IMR-90 (cell line): ENCODE measurements at regions of chr12 and their contacts with region 1.

Region 1: GRCh38 chr12:18430425-18431048 is 169.2 kb downstream of the PIK3C2G start:
- DNase-seq: peak; percentile 71
- ATAC-seq: peak; percentile 99
- H3K4me3 ChIP-seq: no peak overlapping the region
- H3K27ac ChIP-seq: no peak overlapping the region
- H3K4me1 ChIP-seq: no peaks in the 10 kb centered on the region
- H3K27me3 ChIP-seq: no peaks in the 10 kb centered on the region
- CTCF ChIP-seq: peak; percentile 86
- POLR2A ChIP-seq: no peak
- RAD21 ChIP-seq: peak; percentile 89

Region 2: GRCh38 chr12:18373181-18373580 is 57.4 kb before region 1 on chr12:
- CTCF ChIA-PET with region 1: no interaction called
- POLR2A ChIA-PET with region 1: no interaction called
- dilution Hi-C with region 1: no loop called
- in situ Hi-C with region 1: no loop called
- intact Hi-C with region 1: no loop called
- DNase-seq: no peak
- ATAC-seq: no peak
- H3K4me3 ChIP-seq: no peak overlapping the region
- H3K27ac ChIP-seq: no peak overlapping the region
- H3K4me1 ChIP-seq: no peaks in the 10 kb centered on the region
- H3K27me3 ChIP-seq: no peaks in the 10 kb centered on the region
- CTCF ChIP-seq: no peak
- POLR2A ChIP-seq: no peak
- RAD21 ChIP-seq: no peak

Region 3: DNA sequence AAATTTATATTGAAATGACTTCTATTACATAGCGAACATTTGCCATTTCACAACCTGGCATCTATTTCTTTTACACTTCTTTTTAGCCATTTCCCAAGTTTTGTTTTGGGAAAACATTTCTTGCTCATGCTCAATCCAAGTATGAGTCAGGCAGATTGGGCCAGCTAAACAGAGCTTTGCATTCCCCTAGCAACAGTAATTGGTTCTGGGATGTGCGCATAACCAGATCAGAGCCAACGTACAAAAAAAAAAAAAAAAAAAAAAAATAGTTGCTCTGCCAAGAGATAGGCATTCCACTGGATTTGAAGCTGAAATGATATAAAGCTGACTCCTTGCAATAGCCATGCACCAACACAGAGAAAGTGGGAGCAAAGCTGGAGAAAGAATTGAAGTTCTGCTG is 269.7 kb after region 1 on chr12:
- CTCF ChIA-PET with region 1: no interaction called
- POLR2A ChIA-PET with region 1: no interaction called
- dilution Hi-C with region 1: no loop called
- in situ Hi-C with region 1: no loop called
- intact Hi-C with region 1: loop called (anchors 10 kb)
- DNase-seq: peak; percentile 96
- ATAC-seq: peak; percentile 77
- H3K4me3 ChIP-seq: no peak overlapping the region
- H3K27ac ChIP-seq: no peak overlapping the region
- H3K4me1 ChIP-seq: peaks cover 2% of the 10 kb centered on the region; the same call in 1 of the 2 replicates
- H3K27me3 ChIP-seq: no peaks in the 10 kb centered on the region
- CTCF ChIP-seq: no peak
- POLR2A ChIP-seq: no peak
- RAD21 ChIP-seq: no peak; the same call in 1 of the 2 replicates

Region 4: GRCh38 chr12:18861287-18861858 is 430.8 kb after region 1 on chr12:
- CTCF ChIA-PET with region 1: no interaction called
- POLR2A ChIA-PET with region 1: no interaction called
- dilution Hi-C with region 1: no loop called
- in situ Hi-C with region 1: no loop called
- intact Hi-C with region 1: loop called (anchors 5 kb)
- DNase-seq: peak; percentile 38
- ATAC-seq: no peak
- H3K4me3 ChIP-seq: no peak overlapping the region
- H3K27ac ChIP-seq: no peak overlapping the region
- H3K4me1 ChIP-seq: no peaks in the 10 kb centered on the region
- H3K27me3 ChIP-seq: no peaks in the 10 kb centered on the region
- CTCF ChIP-seq: peak; percentile 43
- POLR2A ChIP-seq: no peak
- RAD21 ChIP-seq: peak; percentile 46

Region 5: DNA sequence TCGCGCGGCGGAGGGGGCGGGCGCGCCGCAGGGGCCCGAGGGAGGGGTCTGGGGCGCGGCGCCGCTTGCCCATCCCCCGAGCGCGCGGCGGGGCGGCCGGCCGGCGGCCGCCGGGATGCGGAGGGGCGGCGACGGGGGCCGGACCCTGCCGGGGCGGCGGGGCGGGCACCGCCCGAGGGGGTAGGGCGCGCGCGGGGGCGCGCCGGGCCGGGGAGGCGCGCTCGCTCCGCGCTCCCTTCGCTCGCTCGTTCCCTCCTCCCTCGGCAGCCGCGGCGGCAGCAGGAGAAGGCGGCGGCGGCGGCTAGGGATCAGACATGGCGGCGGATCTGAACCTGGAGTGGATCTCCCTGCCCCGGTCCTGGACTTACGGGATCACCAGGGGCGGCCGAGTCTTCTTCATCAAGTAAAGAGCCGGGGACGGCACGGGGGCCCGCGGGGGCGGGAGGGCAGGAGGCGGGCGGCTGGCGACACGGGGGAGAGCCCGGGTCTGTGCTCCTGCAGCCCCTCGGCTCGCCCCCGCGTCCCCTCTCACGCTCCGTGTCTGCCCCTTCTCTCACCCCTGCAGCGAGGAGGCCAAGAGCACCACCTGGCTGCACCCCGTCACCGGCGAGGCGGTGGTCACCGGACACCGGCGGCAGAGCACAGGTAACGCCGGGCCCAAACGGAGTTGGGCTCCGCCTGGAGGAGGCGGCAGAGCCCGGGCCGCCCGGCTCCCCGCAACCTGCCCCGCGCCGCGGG is 699.1 kb after region 1 on chr12 and contains the start of gene PLEKHA5:
- CTCF ChIA-PET with region 1: no interaction called
- POLR2A ChIA-PET with region 1: no interaction called
- dilution Hi-C with region 1: no loop called
- in situ Hi-C with region 1: no loop called
- intact Hi-C with region 1: loop called (anchors 2 kb)
- DNase-seq: peak; percentile 64
- ATAC-seq: peak; percentile 85
- H3K4me3 ChIP-seq: peak within 1 kb of the TSS; percentile 77
- H3K27ac ChIP-seq: peak within 1 kb of the TSS; percentile 81
- H3K4me1 ChIP-seq: no peaks in the 10 kb centered on the region
- H3K27me3 ChIP-seq: no peaks in the 10 kb centered on the region
- CTCF ChIP-seq: 0 out of 2 replicates have a peak, but pooled peaks have one; percentile 6
- POLR2A ChIP-seq: no peak
- RAD21 ChIP-seq: no peak
- total RNA-seq, gene PLEKHA5: 12.2 and 16.1 TPM in 2 replicates

Region 6: DNA sequence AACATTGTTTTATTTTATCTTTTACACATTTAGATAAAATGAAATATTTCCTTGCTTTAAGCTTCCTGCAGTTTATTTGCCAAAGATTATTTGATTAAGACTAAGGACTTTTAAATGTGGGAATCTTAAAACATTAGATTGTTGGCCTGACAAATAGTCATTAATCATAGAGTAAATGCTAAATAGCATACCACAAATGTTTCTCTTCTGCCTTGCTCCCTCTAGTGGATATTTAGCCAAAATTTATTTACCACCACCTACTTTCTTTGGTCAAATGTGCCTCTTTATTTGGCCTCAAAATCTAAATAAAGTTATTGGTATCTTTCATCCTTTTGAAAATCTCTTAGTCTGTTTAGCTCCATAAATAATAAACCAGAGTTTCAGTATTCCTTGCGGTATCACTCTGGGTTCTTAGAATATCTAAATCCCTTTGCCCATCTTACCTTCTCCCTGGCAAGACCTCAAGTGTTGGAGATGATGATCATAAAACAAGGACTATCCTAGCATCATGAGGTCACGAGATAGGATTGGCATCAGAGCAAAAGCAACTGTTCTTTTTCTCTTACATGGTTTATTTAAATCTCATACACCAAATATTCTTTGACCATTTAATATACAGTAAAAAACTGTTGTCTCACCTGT is 858.2 kb after region 1 on chr12:
- CTCF ChIA-PET with region 1: no interaction called
- POLR2A ChIA-PET with region 1: no interaction called
- dilution Hi-C with region 1: no loop called
- in situ Hi-C with region 1: loop called (anchors 25 kb)
- intact Hi-C with region 1: loop called (anchors 10 kb)
- DNase-seq: peak; percentile 44
- ATAC-seq: 0 out of 2 replicates have a peak, but pooled peaks have one; percentile 46
- H3K4me3 ChIP-seq: no peak overlapping the region
- H3K27ac ChIP-seq: no peak overlapping the region
- H3K4me1 ChIP-seq: no peaks in the 10 kb centered on the region
- H3K27me3 ChIP-seq: no peaks in the 10 kb centered on the region
- CTCF ChIP-seq: peak; percentile 65
- POLR2A ChIP-seq: no peak
- RAD21 ChIP-seq: peak; percentile 69